WTC11 (cell line): ENCODE measurements at regions of chr1 and their contacts with region 1.

Region 1: GRCh38 chr1:223133824-223134435 is 9.1 kb downstream of the TLR5 start:
- DNase-seq: peak; percentile 91
- ATAC-seq: peak; percentile 78
- H3K4me3 Mint-ChIP-seq: peak overlapping the region; percentile 69
- H3K27ac Mint-ChIP-seq: peak overlapping the region; percentile 85
- H3K4me1 Mint-ChIP-seq: peaks cover 43% of the 10 kb centered on the region
- H3K27me3 Mint-ChIP-seq: peaks cover 40% of the 10 kb centered on the region
- CTCF ChIP-seq: no peak; the same call in none of the 2 replicates

Region 2: DNA sequence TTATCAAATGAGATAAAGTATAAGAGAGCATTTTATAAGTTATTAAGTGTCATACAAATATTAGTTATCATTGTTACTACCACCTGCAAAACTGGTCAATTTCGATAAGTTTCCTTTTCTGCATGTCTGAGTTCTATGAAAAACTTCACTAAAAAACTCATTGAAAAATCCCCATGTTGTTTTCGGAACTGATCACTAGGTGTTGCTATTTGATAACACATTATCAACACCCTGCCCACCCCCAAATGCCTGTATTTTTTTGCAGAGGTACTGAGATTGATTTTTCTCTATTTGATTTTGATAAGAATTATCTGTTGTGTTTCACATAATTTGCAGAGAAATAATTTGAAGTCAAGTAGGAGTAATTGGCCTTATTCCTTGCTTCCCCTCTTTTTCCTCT is 341.2 kb before region 1 on chr1:
- CTCF ChIA-PET with region 1: interaction called, 20 read pairs
- POLR2A ChIA-PET with region 1: no interaction called
- DNase-seq: no peak
- ATAC-seq: peak; percentile 58
- H3K4me3 Mint-ChIP-seq: no peak overlapping the region
- H3K27ac Mint-ChIP-seq: no peak overlapping the region
- H3K4me1 Mint-ChIP-seq: peaks cover 7% of the 10 kb centered on the region; the same call in 1 of the 2 replicates
- H3K27me3 Mint-ChIP-seq: peaks cover 26% of the 10 kb centered on the region
- CTCF ChIP-seq: 0 out of 2 replicates have a peak, but pooled peaks have one; percentile 13

Region 3: DNA sequence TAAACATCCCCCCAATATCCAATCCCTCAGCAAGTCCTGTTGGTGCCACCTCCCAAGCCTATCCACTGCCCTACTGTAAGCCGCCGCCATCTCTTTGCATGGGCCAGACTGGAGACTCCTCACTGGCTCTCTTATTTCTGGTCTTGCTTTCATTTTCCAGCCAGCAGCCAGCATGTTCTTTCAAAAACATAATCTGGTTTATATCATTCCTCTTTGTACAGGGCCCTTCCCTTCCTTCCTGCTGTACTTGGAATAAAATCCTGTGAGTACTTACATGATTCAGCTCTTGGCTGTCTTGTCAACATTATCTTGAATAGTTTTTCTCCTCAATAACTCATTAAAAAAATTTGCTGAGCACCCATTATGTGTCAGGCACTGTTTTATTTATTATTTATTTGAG is 19.1 kb before region 1 on chr1:
- CTCF ChIA-PET with region 1: interaction called, 13 read pairs
- POLR2A ChIA-PET with region 1: no interaction called
- DNase-seq: no peak
- ATAC-seq: no peak
- H3K4me3 Mint-ChIP-seq: no peak overlapping the region
- H3K27ac Mint-ChIP-seq: no peak overlapping the region
- H3K4me1 Mint-ChIP-seq: peaks cover 9% of the 10 kb centered on the region
- H3K27me3 Mint-ChIP-seq: peaks cover 4% of the 10 kb centered on the region; the same call in 1 of the 2 replicates
- CTCF ChIP-seq: no peak

Region 4: DNA sequence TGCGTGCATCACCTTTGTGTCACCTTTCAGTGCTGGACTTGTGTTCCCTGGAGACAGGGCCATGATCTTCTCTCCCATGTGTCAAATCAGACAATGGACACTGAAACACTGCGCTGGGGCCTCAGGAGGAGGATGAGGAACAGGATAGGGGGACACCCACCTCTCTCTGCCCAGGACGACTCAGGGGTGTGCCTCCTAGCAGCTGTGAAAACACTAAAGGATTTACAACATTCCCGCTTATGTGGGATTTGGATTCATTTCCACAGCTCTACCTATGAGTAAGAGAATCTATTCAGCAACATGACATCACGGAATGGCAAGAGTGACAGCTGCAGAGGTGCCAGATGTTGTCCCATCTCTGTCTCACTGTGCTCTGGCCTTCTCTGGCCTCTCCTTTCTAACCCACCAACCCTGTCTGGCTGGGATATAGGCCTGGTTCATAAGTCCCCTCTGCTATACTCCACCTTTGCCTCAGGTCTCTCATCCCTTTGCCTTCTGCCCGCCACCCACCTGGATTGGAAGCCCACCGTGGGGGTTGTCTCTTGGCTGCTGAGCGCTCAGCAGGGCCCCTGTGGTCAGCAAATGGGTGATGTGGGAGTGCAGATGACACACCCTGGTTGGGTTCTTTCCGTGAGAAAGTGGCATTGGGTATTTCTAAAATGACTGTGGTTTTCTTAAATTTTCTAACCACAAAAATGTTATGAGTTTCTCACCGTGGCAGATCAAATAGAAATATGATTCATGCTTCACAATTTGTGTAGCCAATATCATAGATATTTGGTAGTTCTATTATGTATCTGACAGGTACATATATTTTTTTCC is 56.2 kb after region 1 on chr1:
- CTCF ChIA-PET with region 1: interaction called, 13 read pairs
- POLR2A ChIA-PET with region 1: no interaction called
- DNase-seq: no peak
- ATAC-seq: no peak
- H3K4me3 Mint-ChIP-seq: no peak overlapping the region
- H3K27ac Mint-ChIP-seq: no peak overlapping the region
- H3K4me1 Mint-ChIP-seq: no peaks in the 10 kb centered on the region
- H3K27me3 Mint-ChIP-seq: peaks cover 8% of the 10 kb centered on the region; the same call in 1 of the 2 replicates
- CTCF ChIP-seq: no peak

Region 5: GRCh38 chr1:223363856-223364684 is 230.1 kb after region 1 on chr1 and contains the start of gene SUSD4:
- CTCF ChIA-PET with region 1: interaction called, 40 read pairs
- POLR2A ChIA-PET with region 1: no interaction called
- DNase-seq: peak; percentile 79
- ATAC-seq: peak; percentile 68
- H3K4me3 Mint-ChIP-seq: peak within 1 kb of the TSS; percentile 88
- H3K27ac Mint-ChIP-seq: no peak within 1 kb of the TSS
- H3K4me1 Mint-ChIP-seq: peaks cover 17% of the 10 kb centered on the region
- H3K27me3 Mint-ChIP-seq: peaks cover 78% of the 10 kb centered on the region
- CTCF ChIP-seq: no peak
- total RNA-seq, gene SUSD4: 1.8 to 2.6 TPM (median 2.6 TPM) in 3 replicates

Region 6: DNA sequence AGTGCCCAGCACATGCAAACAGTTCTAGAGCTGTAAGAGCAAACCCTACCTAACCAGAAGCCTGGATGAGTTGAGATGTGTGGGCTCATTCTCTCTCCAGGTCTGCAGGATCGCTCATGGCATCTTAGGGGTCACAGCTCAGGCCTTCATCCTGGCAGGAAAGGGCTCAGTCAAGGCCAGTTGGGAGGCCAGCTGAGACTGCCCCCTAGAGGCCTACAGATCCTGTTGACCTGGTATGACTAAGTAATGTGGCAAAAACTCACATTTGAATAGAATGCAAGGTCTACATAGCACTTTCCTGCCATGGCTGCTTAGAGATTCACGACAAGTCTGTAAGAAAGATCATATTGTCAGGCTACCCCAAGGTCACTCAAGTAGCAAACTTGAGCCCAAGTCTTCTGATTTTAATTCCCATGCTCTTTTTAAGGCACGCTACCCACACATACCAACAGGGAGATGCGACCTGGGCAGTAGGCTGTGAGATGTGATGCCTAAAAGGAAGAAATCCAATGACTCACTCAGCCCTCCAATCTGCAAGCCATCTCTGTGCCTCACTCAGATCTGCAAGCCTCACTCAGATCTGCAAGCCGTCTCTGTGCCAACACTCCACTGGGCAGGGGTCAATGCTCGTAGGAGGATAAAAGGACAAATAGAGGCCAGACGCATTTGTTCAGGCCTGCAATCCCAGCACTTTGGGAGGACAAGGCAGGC is 536.7 kb after region 1 on chr1:
- CTCF ChIA-PET with region 1: interaction called, 10 read pairs
- POLR2A ChIA-PET with region 1: no interaction called
- DNase-seq: peak; percentile 66
- ATAC-seq: peak; percentile 97
- H3K4me3 Mint-ChIP-seq: no peak overlapping the region
- H3K27ac Mint-ChIP-seq: no peak overlapping the region
- H3K4me1 Mint-ChIP-seq: peaks cover 3% of the 10 kb centered on the region; the same call in 1 of the 2 replicates
- H3K27me3 Mint-ChIP-seq: peaks cover 10% of the 10 kb centered on the region
- CTCF ChIP-seq: peak; percentile 63; the same call in 1 of the 2 replicates